Activated naive CD4-positive, alpha-beta T cell treated with anti-CD3 and anti-CD28 coated beads for 36 hours (primary cell): ENCODE measurements at regions of chr17 and their contacts with region 1.

Region 1: GRCh38 chr17:75914643-75915267 is 10.1 kb upstream of the MRPL38 start:
- DNase-seq: no peak
- H3K4me3 Mint-ChIP-seq: no peak overlapping the region
- H3K27ac Mint-ChIP-seq: no peak overlapping the region
- H3K4me1 Mint-ChIP-seq: no peaks in the 10 kb centered on the region
- H3K27me3 Mint-ChIP-seq: no peaks in the 10 kb centered on the region

Region 2: GRCh38 chr17:75898791-75899752 is 15.7 kb before region 1 on chr17:
- CTCF ChIA-PET with region 1: no interaction called
- intact Hi-C with region 1: no loop called
- DNase-seq: no peak
- H3K4me3 Mint-ChIP-seq: no peak overlapping the region
- H3K27ac Mint-ChIP-seq: no peak overlapping the region
- H3K4me1 Mint-ChIP-seq: peaks cover 32% of the 10 kb centered on the region
- H3K27me3 Mint-ChIP-seq: no peaks in the 10 kb centered on the region

Region 3: DNA sequence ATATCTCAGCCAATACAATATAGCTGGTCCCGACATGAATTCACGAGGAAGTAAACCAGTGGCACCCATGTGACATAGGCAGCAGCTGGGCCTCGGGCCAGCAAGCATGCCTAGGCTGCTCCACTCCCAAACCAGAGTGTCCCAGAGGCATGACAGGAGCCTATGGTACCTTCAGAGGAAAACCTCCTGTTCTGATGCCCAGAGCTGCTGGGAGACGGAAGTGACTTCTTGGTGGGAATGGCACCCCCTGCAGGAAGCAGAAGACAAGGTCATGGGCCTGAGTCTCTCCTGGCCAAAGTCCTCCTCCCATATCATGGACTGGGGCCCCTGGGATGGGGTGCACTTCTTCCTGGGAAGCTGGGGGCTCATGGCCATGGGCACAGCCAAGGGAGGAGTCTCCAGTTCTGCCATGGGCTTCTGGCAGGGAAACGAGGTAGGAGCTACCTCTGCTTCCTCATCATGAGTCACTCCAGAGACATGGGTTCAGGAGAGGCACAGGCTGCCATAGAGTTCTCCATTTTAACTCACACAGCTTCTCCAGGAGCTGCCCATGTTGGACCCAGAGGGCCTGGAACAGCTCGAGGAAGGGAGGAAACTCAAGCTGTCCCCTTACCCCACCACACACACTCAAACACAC is 12.6 kb after region 1 on chr17:
- CTCF ChIA-PET with region 1: interaction called, 11 read pairs
- intact Hi-C with region 1: no loop called
- DNase-seq: no peak
- H3K4me3 Mint-ChIP-seq: no peak overlapping the region
- H3K27ac Mint-ChIP-seq: no peak overlapping the region
- H3K4me1 Mint-ChIP-seq: no peaks in the 10 kb centered on the region
- H3K27me3 Mint-ChIP-seq: no peaks in the 10 kb centered on the region

Region 4: GRCh38 chr17:76492989-76493501 is 578.3 kb after region 1 on chr17:
- CTCF ChIA-PET with region 1: no interaction called
- intact Hi-C with region 1: no loop called
- DNase-seq: peak; percentile 83
- H3K4me3 Mint-ChIP-seq: peak overlapping the region; percentile 58
- H3K27ac Mint-ChIP-seq: peak overlapping the region; percentile 77
- H3K4me1 Mint-ChIP-seq: peaks cover 31% of the 10 kb centered on the region
- H3K27me3 Mint-ChIP-seq: no peaks in the 10 kb centered on the region